Transverse colon (tissue), 4 donors: ENCODE measurements at regions of chr1 and their contacts with region 1.

Region 1: DNA sequence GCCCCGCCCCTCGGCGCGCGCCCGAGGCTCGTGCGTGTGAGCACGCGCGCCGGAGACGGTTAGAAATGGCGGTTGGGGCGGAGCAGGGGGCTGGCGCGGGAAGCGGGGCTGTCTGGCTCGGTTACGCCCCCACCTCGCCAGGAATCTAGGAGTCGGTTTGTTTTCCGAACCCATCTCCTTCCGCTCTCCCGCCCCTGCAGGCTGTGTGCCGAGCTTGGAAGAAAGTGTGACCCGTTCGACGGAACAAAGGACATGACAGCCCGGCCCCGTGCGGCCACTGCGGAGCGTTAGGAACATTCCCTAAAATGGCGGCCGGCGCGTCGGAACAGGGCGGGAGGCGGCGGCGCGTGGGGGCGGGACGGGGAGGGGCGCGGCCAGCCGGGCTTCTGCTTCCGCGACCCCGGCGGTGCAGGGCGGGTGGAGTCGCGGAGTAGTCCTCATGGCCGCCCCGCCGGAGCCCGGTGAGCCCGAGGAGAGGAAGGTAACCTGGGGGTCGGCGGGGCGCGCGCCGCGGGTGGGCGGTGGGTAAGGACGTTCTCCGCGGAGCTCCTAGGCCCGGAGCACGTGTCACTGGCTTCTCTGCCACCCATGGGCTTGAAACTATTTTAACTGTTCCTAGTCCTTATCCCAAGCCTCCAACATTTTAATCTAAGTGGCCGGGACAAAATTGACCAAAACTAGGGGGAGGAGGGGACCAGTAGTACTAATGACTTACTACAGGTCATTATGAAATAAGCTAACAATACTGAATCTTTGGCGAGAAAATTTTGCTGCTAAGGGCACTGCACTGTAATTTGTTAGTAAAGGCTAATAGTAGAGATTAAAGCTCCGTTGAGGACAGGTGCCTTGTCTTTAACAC is at the start of gene COX20:
- DNase-seq: peak; percentile 92
- H3K4me3 ChIP-seq: peak within 1 kb of the TSS; percentile 40 to 68 (median 62)
- H3K27ac ChIP-seq: peak within 1 kb of the TSS; percentile 98 to 100 (median 99)
- H3K4me1 ChIP-seq: peaks cover 17 to 47% (median 30%) of the 10 kb centered on the region in 4 donors
- H3K27me3 ChIP-seq: no peaks in the 10 kb centered on the region
- CTCF ChIP-seq: peak in 1 of 5 experiments; percentile 2
- EP300 ChIP-seq: peak; percentile 93
- POLR2A ChIP-seq: peak; percentile 70
- total RNA-seq, gene COX20: 6.0 to 41.3 (median 32.3) TPM

Region 2: DNA sequence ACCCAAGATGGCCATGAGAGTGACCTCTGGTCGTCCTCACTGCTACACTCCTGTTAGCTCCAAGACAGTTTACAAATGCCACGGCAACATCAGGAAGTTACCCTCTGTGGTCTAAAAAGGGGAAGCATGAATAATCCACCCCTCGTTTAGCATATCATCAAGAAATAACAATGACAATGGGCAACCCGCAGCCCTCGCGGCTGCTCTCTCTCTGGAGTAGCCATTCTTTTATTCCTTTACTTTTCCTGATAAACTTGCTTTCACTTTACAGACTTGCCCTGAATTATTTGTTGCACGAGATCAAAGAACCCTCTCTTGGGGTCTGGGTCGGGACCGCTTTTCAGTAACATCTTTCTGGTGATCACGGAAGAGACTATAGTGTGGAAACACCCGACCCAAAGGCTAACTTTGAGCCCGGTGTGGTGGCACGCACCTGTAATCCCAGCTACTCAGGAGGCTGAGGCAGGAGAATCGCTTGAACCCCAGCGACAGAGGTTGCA is 19.9 kb before region 1 on chr1:
- in situ Hi-C with region 1: no loop called
- intact Hi-C with region 1: no loop called
- DNase-seq: no peak
- H3K4me3 ChIP-seq: no peak overlapping the region
- H3K27ac ChIP-seq: no peak overlapping the region
- H3K4me1 ChIP-seq: no peaks in the 10 kb centered on the region
- H3K27me3 ChIP-seq: peaks cover 4% of the 10 kb centered on the region
- CTCF ChIP-seq: no peak
- EP300 ChIP-seq: no peak
- POLR2A ChIP-seq: no peak

Region 3: GRCh38 chr1:244970661-244971551 is 135.4 kb after region 1 on chr1:
- in situ Hi-C with region 1: loop called in 1 of 4 experiments (anchors 10 kb)
- intact Hi-C with region 1: no loop called
- DNase-seq: peak; percentile 93
- H3K4me3 ChIP-seq: peak overlapping the region; percentile 73 to 87 (median 80)
- H3K27ac ChIP-seq: peak overlapping the region; percentile 99 to 100 (median 100)
- H3K4me1 ChIP-seq: peaks cover 5 to 24% (median 9%) of the 10 kb centered on the region in 4 donors
- H3K27me3 ChIP-seq: no peaks in the 10 kb centered on the region
- CTCF ChIP-seq: peak; percentile 43 to 96 (median 67)
- EP300 ChIP-seq: no peak
- POLR2A ChIP-seq: peak; percentile 89